ENCODE measurements at regions of chr1 and their contacts with region 1.

Region 1: GRCh38 chr1:155167166-155168104 is 5.7 kb downstream of the KRTCAP2 start:
- DNase-seq: peak; percentile 95
- H3K4me3 ChIP-seq: peak overlapping the region; percentile 10 to 42 (median 20)
- H3K27ac ChIP-seq: peak overlapping the region; percentile 29 to 66 (median 49)
- H3K4me1 ChIP-seq: peaks cover 22 to 38% (median 36%) of the 10 kb centered on the region in 4 donors
- H3K27me3 ChIP-seq: no peaks in the 10 kb centered on the region
- CTCF ChIP-seq: peak; percentile 85 to 95 (median 89)
- EP300 ChIP-seq: no peak
- POLR2A ChIP-seq: no peak

Region 2: DNA sequence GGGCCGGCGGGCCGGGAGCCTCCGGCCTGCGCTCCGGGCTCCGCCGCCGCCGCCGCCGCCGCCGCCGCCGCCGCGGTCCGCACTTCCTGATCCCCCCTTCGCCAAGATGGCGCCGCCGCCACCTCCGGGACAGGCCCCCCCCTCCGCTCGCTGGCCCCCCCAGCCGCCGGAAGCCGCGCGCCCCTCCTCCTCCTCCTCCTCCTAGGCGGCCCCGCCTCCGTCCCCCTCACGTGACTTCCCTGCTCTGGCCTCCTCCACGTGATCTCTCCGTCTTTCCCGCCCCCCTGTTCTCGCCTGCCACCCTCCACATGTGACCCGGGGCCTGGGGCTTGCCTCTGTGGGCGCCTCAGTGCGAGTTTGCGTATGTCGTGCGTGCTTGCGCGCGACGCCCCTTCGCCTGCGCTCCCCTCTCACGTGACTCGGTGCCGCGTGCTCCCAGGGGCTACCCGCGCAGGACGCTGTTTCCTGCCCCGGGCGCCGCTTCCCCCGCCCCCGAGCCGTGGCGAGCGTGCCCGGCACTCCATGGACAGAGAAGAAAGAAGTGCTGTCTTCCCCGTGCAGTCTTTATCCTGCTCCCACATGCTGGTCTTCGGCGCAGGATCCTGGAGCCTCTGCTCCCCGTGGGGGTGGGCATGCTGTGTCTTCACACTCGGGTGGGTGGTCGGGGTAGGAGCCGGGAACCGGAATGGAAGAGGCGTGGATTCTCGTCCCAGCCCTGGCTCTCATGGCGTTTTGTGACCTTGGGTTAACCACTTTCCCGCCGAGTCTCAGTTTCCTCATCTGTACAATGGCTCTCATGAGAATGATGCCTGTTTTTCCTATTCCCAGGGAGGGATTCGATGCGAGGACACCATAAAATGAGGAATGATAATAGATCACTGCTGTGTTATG is 608.6 kb before region 1 on chr1 and contains the start of gene UBE2Q1:
- intact Hi-C with region 1: no loop called
- DNase-seq: peak; percentile 100
- H3K4me3 ChIP-seq: peak within 1 kb of the TSS; percentile 84 to 99 (median 92)
- H3K27ac ChIP-seq: peak within 1 kb of the TSS; percentile 92 to 96 (median 96)
- H3K4me1 ChIP-seq: peaks cover 19 to 51% (median 40%) of the 10 kb centered on the region in 4 donors
- H3K27me3 ChIP-seq: no peaks in the 10 kb centered on the region
- CTCF ChIP-seq: no peak
- EP300 ChIP-seq: no peak
- POLR2A ChIP-seq: peak; percentile 52
- total RNA-seq, gene UBE2Q1: 23.7 to 41.3 (median 31.3) TPM

Region 3: DNA sequence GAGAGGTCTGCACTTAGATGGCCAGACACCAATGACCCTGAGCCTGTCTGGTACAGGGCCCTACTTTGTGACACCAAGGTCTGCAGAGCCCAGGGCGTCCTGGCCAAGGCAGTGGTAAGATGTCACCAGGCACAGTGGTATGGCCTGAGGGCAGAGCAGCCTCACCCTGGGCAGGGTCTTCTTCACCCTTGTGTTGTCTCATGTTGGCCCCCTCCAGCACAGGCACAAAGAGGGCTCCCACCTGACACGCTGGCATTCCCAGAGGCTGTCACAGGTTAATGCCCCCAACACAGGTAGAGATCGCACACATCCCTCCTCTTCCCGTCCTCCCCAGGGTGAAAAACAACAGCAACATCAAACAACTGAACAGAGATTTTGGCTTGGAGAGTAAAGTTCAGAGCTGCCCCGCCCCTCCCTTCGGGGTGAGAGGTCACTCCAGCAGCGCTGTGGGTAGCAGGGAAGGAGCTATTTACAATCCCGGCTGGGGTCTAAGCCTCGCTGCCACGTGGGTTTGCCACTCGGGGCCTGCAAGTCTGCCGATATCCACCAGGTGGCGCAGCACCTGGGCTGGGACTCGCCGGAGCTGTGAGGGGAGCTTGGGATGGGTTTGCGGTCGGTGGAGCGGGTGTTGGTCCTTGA is 76.2 kb before region 1 on chr1:
- intact Hi-C with region 1: loop called (anchors 1 kb)
- DNase-seq: peak; percentile 96
- H3K4me3 ChIP-seq: no peak overlapping the region
- H3K27ac ChIP-seq: peak overlapping the region in 1 of 4 donors; percentile 15
- H3K4me1 ChIP-seq: peaks cover 23 to 53% (median 38%) of the 10 kb centered on the region in 4 donors
- H3K27me3 ChIP-seq: no peaks in the 10 kb centered on the region
- CTCF ChIP-seq: peak in 2 of 3 experiments; percentile 97 to 98
- EP300 ChIP-seq: no peak
- POLR2A ChIP-seq: no peak

Region 4: GRCh38 chr1:155236441-155236840 is 69.0 kb after region 1 on chr1:
- intact Hi-C with region 1: no loop called
- DNase-seq: no peak
- H3K4me3 ChIP-seq: no peak overlapping the region
- H3K27ac ChIP-seq: no peak overlapping the region
- H3K4me1 ChIP-seq: peaks cover 7 to 34% (median 32%) of the 10 kb centered on the region in 4 donors
- H3K27me3 ChIP-seq: no peaks in the 10 kb centered on the region
- CTCF ChIP-seq: no peak
- EP300 ChIP-seq: no peak
- POLR2A ChIP-seq: no peak